Naive thymus-derived CD4-positive, alpha-beta T cell (primary cell): ENCODE measurements at regions of chr18 and their contacts with region 1.

Region 1: GRCh38 chr18:54845787-54846186 is 17.5 kb downstream of the RAB27B start:
- DNase-seq: no peak
- ATAC-seq: no peak
- H3K4me3 ChIP-seq: no peak overlapping the region
- H3K4me3 Mint-ChIP-seq: no peak overlapping the region
- H3K27ac ChIP-seq: no peak overlapping the region
- H3K27ac Mint-ChIP-seq: peak overlapping the region in 1 of 9 donors; percentile 17
- H3K4me1 ChIP-seq: no peaks in the 10 kb centered on the region
- H3K4me1 Mint-ChIP-seq: peaks cover 0 to 5% (median 0%) of the 10 kb centered on the region in 7 donors
- H3K27me3 ChIP-seq: no peaks in the 10 kb centered on the region
- H3K27me3 Mint-ChIP-seq: peaks cover 0 to 2% (median 0%) of the 10 kb centered on the region in 5 donors

Region 2: GRCh38 chr18:54069729-54070128 is 776.1 kb before region 1 on chr18:
- CTCF ChIA-PET with region 1: no interaction called
- POLR2A ChIA-PET with region 1: no interaction called
- intact Hi-C with region 1: no loop called
- DNase-seq: no peak
- ATAC-seq: no peak
- H3K4me3 ChIP-seq: no peak overlapping the region
- H3K4me3 Mint-ChIP-seq: no peak overlapping the region
- H3K27ac ChIP-seq: no peak overlapping the region
- H3K27ac Mint-ChIP-seq: no peak overlapping the region
- H3K4me1 ChIP-seq: no peaks in the 10 kb centered on the region
- H3K4me1 Mint-ChIP-seq: no peaks in the 10 kb centered on the region
- H3K27me3 ChIP-seq: no peaks in the 10 kb centered on the region
- H3K27me3 Mint-ChIP-seq: peaks cover 0 to 12% (median 5%) of the 10 kb centered on the region in 5 donors

Region 3: DNA sequence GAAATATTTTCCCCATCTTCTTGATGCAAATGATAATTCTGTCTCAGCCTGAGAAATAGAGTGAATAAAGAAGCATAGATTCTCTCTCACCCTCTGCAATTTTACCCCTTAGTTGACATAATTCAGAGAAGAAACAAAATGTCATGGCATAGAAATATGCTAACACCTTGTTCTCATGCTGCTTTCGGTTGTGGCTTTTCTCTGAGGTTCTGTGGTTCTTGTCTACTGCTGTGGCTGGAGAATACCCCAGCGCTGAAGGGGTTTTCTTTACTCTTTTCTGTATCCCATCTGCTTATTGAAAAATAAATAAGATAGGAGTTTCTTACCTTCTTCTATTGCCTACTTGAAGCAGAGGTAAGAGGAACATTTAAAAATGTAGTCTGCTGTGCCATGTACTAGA is 32.9 kb before region 1 on chr18:
- CTCF ChIA-PET with region 1: no interaction called
- POLR2A ChIA-PET with region 1: no interaction called
- intact Hi-C with region 1: loop called in 1 of 2 experiments (anchors 5 kb)
- DNase-seq: no peak
- ATAC-seq: peak; percentile 79
- H3K4me3 ChIP-seq: no peak overlapping the region
- H3K4me3 Mint-ChIP-seq: peak overlapping the region in 1 of 10 donors; percentile 11
- H3K27ac ChIP-seq: no peak overlapping the region
- H3K27ac Mint-ChIP-seq: no peak overlapping the region
- H3K4me1 ChIP-seq: peaks cover 0 to 3% of the 10 kb centered on the region in 2 donors
- H3K4me1 Mint-ChIP-seq: peaks cover 3 to 22% (median 9%) of the 10 kb centered on the region in 7 donors
- H3K27me3 ChIP-seq: no peaks in the 10 kb centered on the region
- H3K27me3 Mint-ChIP-seq: peaks cover 0 to 41% (median 8%) of the 10 kb centered on the region in 5 donors

Region 4: DNA sequence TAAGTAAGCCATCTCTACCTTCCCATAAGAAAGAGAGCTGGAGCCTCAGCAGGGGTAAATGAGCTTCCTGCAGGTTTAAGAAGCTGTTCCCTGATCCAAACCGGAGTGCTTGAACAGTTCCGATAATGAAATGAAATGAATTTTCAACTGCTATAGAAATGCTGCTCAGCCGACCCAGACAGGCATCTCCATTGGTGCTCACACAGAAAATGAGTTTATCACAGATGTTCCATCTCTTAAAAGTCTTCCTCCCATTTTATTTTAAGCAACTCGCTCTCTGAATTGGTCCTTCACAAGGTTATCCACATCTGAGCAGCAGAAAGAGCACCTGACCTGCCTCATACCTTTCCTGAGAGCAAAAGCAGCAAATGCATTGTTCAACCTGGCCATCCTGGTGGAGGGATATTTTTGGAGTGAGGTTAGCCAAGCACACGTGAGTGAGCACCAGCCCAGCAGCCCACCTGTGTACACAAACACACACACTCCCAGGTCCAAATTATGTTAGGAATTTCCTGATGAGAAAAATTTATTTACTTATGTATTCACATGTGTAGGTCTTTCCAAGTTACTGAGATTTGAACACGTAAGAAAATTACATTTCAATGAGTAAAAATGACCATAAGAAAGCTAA is 155.7 kb after region 1 on chr18:
- CTCF ChIA-PET with region 1: no interaction called
- POLR2A ChIA-PET with region 1: no interaction called
- intact Hi-C with region 1: no loop called
- DNase-seq: no peak
- ATAC-seq: no peak
- H3K4me3 ChIP-seq: no peak overlapping the region
- H3K4me3 Mint-ChIP-seq: no peak overlapping the region
- H3K27ac ChIP-seq: no peak overlapping the region
- H3K27ac Mint-ChIP-seq: no peak overlapping the region
- H3K4me1 ChIP-seq: no peaks in the 10 kb centered on the region
- H3K4me1 Mint-ChIP-seq: no peaks in the 10 kb centered on the region
- H3K27me3 ChIP-seq: no peaks in the 10 kb centered on the region
- H3K27me3 Mint-ChIP-seq: peaks cover 0 to 17% (median 6%) of the 10 kb centered on the region in 5 donors